ENCODE measurements at regions of chr17 and their contacts with region 1.

Region 1: DNA sequence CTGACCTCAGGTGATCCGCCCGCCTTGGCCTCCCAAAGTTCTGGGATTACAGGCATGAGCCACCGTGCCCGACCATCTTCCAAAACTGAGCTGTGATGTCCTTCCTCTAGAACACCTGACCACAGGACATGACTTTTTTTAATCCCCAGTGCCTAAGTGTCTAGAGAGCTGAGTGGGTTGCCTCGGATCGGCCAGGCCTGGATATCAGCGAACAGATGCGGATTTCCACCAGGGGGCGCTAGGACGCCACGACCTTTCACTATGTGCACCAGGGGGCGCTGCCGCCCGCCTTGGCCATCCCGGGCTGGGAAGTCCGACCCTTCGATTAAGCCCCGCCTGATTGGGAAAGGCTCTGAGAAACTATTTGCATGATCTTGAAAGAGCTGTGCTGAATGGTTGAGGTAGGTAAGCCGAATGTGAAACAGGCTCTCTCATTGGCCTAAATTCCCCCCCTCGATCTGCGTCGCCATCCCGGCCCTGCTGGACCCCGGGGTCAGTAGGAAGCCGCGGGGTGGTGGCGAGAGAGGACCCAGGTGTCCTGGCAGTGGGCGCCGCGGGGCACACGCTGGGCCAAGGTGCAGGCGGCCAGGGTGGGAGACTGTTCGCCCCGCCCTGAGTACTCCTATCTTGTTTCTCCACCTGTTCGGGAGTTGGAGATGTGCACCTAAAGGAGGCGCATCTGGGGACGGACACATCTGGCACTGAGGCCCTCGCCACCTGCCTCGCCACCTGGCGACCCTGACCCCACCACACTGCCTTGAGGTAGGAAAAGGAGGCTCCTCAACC is at the start of gene ACBD4:
- DNase-seq: peak; percentile 99
- H3K4me3 Mint-ChIP-seq: peak within 1 kb of the TSS; percentile 88
- H3K27ac Mint-ChIP-seq: peak within 1 kb of the TSS; percentile 81
- H3K4me1 Mint-ChIP-seq: peaks cover 8% of the 10 kb centered on the region
- H3K27me3 Mint-ChIP-seq: peaks cover 11% of the 10 kb centered on the region
- total RNA-seq, gene ACBD4: 13.5 and 14.7 TPM in 2 replicates

Region 2: GRCh38 chr17:44775136-44775837 is 360.1 kb before region 1 on chr17:
- intact Hi-C with region 1: loop called (anchors 2 kb)
- DNase-seq: peak; percentile 99
- H3K4me3 Mint-ChIP-seq: peak overlapping the region; percentile 88
- H3K27ac Mint-ChIP-seq: peak overlapping the region; percentile 81
- H3K4me1 Mint-ChIP-seq: peaks cover 14% of the 10 kb centered on the region
- H3K27me3 Mint-ChIP-seq: peaks cover 8% of the 10 kb centered on the region

Region 3: DNA sequence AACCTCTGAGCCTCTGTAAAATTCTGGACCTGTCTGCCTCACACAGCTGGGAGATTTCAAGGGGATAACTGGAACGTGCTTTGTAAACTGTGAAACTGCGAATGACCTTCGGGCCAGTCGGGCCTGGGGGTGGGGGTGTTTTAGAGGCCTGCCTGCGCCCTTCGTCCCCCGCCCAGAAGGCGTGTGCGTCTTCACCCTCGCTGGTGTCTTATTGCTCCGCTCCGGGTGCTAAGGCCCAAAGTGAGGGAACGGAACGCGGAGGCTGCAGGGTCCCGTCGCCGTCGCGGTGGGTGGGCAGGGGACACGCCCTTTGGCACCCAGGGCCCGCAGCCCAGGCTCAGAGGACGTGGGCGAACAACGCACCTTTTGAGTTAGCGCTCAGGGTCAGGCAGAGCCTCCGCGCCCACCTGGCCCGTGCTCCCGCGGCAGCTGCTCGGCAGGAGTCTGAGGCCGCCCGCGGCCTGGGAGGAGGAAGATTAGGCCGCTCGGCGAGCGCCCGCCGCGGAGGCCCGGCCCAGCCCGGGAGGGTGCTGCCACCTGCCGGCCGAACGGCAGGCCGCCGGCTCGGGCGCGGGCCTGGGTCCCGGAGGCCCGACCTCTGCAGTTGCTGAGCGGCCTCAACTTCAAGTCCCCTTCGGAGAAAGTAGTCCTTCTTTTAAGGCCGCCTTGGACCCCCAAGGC is 113.6 kb before region 1 on chr17:
- intact Hi-C with region 1: loop called (anchors 1 kb)
- DNase-seq: peak; percentile 92
- H3K4me3 Mint-ChIP-seq: peak overlapping the region; percentile 53
- H3K27ac Mint-ChIP-seq: no peak overlapping the region
- H3K4me1 Mint-ChIP-seq: peaks cover 18% of the 10 kb centered on the region
- H3K27me3 Mint-ChIP-seq: peaks cover 33% of the 10 kb centered on the region

Region 4: GRCh38 chr17:45060797-45061605 is 74.4 kb before region 1 on chr17 and contains the start of gene NMT1:
- intact Hi-C with region 1: loop called (anchors 2 kb)
- DNase-seq: peak; percentile 99
- H3K4me3 Mint-ChIP-seq: peak within 1 kb of the TSS; percentile 91
- H3K27ac Mint-ChIP-seq: peak within 1 kb of the TSS; percentile 100
- H3K4me1 Mint-ChIP-seq: peaks cover 29% of the 10 kb centered on the region
- H3K27me3 Mint-ChIP-seq: no peaks in the 10 kb centered on the region
- total RNA-seq, gene NMT1: 176 and 182 TPM in 2 replicates

Region 5: GRCh38 chr17:45077643-45078042 is 57.7 kb before region 1 on chr17:
- intact Hi-C with region 1: no loop called
- DNase-seq: no peak
- H3K4me3 Mint-ChIP-seq: no peak overlapping the region
- H3K27ac Mint-ChIP-seq: no peak overlapping the region
- H3K4me1 Mint-ChIP-seq: peaks cover 17% of the 10 kb centered on the region
- H3K27me3 Mint-ChIP-seq: no peaks in the 10 kb centered on the region

Region 6: DNA sequence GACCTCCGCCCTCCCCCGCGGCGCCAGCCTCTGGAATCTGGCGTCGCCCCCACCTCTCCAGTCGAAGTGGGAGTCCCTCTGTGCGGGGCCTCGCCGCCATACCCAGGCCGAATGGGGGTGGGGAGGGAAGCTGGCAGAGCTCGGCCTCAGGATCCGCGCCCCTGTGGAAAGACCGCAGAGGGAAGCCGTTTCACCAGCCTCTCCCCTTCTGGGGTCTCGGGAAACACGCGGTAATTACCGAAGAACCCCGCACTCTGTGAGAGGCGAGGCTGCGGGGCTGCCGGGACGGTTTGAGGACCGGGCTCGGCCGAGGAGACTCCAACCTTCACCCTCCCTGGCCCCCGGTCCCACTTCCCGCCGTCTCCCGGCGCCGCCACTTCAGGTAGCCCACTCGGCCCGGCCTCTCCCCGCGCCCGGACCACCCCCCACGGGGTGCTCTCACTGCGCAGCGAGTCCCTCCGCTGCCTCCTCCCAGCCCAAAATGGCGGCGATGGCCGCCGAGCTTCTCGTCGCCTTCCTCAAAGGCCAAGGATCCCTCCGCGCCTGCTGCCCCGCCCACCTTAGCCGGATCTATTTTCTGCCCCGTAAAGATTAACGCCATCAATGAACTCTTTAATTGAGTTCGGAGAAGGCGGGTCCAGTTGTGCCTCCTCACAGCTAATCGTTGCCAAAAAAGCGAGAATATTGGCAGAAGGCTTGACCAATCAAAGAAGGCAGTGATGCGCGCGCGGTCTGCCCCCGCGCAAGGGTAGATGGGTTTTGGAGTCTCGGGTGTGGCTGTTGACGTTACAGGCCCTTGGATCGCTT is 25.8 kb after region 1 on chr17:
- intact Hi-C with region 1: loop called (anchors 1 kb)
- DNase-seq: peak; percentile 100
- H3K4me3 Mint-ChIP-seq: peak overlapping the region; percentile 99
- H3K27ac Mint-ChIP-seq: peak overlapping the region; percentile 98
- H3K4me1 Mint-ChIP-seq: peaks cover 38% of the 10 kb centered on the region
- H3K27me3 Mint-ChIP-seq: no peaks in the 10 kb centered on the region

Region 7: GRCh38 chr17:45172454-45173286 is 37.3 kb after region 1 on chr17:
- intact Hi-C with region 1: loop called (anchors 2 kb)
- DNase-seq: peak; percentile 84
- H3K4me3 Mint-ChIP-seq: peak overlapping the region; percentile 84
- H3K27ac Mint-ChIP-seq: peak overlapping the region; percentile 89
- H3K4me1 Mint-ChIP-seq: peaks cover 19% of the 10 kb centered on the region
- H3K27me3 Mint-ChIP-seq: no peaks in the 10 kb centered on the region

Region 8: DNA sequence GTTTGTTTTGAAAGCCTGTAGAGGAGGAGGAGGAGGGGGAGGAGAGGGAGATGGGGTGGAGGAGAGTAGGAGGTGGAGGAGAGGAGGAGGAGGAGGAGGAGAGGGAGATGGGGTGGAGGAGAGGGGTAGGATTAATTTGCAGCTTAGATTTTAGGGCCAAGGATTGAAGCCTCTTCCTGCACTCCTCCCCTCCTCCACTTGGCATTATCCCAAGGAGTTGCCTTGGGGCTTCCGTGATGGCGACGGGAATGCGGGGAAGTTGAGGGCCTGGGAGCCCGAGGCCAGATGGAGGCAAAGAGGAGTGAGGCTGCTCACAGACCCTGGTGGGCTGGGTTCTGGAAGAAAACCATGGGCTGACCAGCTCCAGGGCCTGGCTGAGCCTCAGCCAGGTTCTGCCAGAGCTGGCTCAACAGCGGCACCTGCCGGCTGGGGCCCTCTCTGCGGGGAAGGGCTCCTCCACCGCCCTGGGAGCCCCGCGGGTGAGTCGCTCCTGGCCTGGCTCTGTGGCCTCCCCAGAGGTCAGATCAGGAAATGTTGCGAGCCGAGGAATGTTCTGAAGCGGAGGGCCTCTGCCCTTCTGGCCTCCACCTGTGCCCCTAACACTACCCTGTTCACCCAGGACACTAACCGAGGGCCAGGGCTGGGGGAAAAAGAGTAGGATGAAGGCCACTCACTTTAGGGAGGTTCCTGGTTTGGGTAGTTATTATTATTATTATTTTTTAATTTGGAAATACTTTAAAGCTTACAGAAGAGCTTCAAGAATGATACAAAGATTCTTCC is 62.4 kb after region 1 on chr17:
- intact Hi-C with region 1: loop called (anchors 1 kb)
- DNase-seq: peak; percentile 97
- H3K4me3 Mint-ChIP-seq: no peak overlapping the region
- H3K27ac Mint-ChIP-seq: no peak overlapping the region
- H3K4me1 Mint-ChIP-seq: peaks cover 3% of the 10 kb centered on the region
- H3K27me3 Mint-ChIP-seq: no peaks in the 10 kb centered on the region

Measured in activated CD4-positive, alpha-beta T cell treated with anti-CD3 and anti-CD28 coated beads, Interleukin-2, amount 10 ng/mL, durations not matched to agents 24 days and 14 days (primary cell).